ENCODE measurements at regions of chr1 and their contacts with region 1.

Region 1: GRCh38 chr1:150979092-150980056 is 2.7 kb upstream of the ANXA9 start:
- DNase-seq: peak; percentile 78 to 95 (median 84)
- ATAC-seq: peak; percentile 57
- H3K4me3 ChIP-seq: peak overlapping the region; percentile 7; the same call in 1 of the 2 replicates
- H3K27ac ChIP-seq: peak overlapping the region; percentile 79
- H3K4me1 ChIP-seq: peaks cover 44 to 56% of the 10 kb centered on the region in 2 experiments
- H3K27me3 ChIP-seq: no peaks in the 10 kb centered on the region
- CTCF ChIP-seq: peak; percentile 100
- EP300 ChIP-seq: peak; percentile 54; the same call in 1 of the 2 replicates
- POLR2A ChIP-seq: 0 out of 2 replicates have a peak, but pooled peaks have one; percentile 34
- RAD21 ChIP-seq: peak; percentile 89 to 94

Region 2: DNA sequence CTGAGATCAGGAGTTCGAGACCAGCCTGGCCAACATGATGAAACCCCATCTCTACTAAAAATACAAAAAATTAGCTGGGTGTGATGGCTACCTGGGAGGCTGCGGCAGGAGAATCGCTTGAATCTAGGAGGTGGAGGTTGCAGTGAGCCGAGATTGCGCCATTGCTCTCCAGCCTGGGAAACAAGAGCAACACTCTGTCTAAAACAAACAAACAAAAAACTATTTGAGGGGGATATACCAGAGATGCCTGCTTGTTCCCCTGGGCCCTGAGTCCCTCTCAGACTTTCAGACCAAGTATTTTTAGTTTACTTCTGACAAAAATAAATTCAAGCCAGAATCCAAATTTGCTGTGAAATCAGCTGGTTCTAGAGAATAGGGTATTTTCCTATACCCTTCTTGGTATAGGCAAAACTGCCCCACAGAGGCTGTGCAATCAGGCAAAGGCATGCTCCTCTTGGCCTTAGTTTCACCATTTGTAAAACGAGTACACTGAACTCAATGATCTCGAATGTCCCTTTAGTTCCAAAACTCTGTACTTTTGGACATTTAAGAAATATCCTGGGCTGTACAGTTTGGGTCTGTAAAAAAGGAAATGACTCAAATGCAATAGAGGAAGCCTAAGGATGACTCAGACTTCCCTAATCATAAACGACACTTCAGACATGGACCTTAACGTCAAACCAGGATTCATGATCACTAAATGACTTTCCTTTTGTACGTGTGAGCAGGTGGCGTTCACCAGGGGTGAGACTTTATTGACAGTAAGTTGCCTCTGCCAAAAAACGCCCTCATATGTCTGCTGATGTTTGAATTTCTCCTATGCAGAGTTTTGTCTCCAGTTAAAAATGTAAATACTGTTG is 366.1 kb before region 1 on chr1:
- CTCF ChIA-PET with region 1: no interaction called
- POLR2A ChIA-PET with region 1: no interaction called
- in situ Hi-C with region 1: no loop called
- intact Hi-C with region 1: loop called (anchors 10 kb)
- DNase-seq: peak; percentile 26 to 87 (median 49)
- ATAC-seq: peak; percentile 79
- H3K4me3 ChIP-seq: no peak overlapping the region
- H3K27ac ChIP-seq: peak overlapping the region; percentile 94
- H3K4me1 ChIP-seq: peaks cover 26 to 44% of the 10 kb centered on the region in 2 experiments
- H3K27me3 ChIP-seq: no peaks in the 10 kb centered on the region
- CTCF ChIP-seq: no peak
- EP300 ChIP-seq: peak; percentile 92
- POLR2A ChIP-seq: no peak
- RAD21 ChIP-seq: peak in 1 of 2 experiments; percentile 7; a peak in 1 of 4 replicates

Region 3: GRCh38 chr1:150876119-150876454 is 103.3 kb before region 1 on chr1:
- CTCF ChIA-PET with region 1: no interaction called
- POLR2A ChIA-PET with region 1: interaction called, 4 read pairs
- in situ Hi-C with region 1: no loop called
- intact Hi-C with region 1: loop called (anchors 2 kb)
- DNase-seq: peak in 1 of 4 experiments; percentile 78
- ATAC-seq: peak; percentile 78
- H3K4me3 ChIP-seq: peak overlapping the region; percentile 72
- H3K27ac ChIP-seq: peak overlapping the region; percentile 80
- H3K4me1 ChIP-seq: peaks cover 4 to 8% of the 10 kb centered on the region in 2 experiments; a peak in 3 of 5 replicates
- H3K27me3 ChIP-seq: no peaks in the 10 kb centered on the region
- CTCF ChIP-seq: no peak
- EP300 ChIP-seq: no peak
- POLR2A ChIP-seq: no peak
- RAD21 ChIP-seq: no peak

Region 4: GRCh38 chr1:150925816-150926741 is 53.3 kb before region 1 on chr1 and contains the start of gene SETDB1:
- CTCF ChIA-PET with region 1: interaction called, 5 read pairs
- POLR2A ChIA-PET with region 1: interaction called, 3 read pairs
- in situ Hi-C with region 1: no loop called
- intact Hi-C with region 1: loop called (anchors 2 kb)
- DNase-seq: peak; percentile 91 to 98 (median 94)
- ATAC-seq: peak; percentile 97
- H3K4me3 ChIP-seq: peak within 1 kb of the TSS; percentile 70
- H3K27ac ChIP-seq: peak within 1 kb of the TSS; percentile 90
- H3K4me1 ChIP-seq: peaks cover 3 to 9% of the 10 kb centered on the region in 2 experiments; a peak in 2 of 5 replicates
- H3K27me3 ChIP-seq: no peaks in the 10 kb centered on the region
- CTCF ChIP-seq: peak; percentile 23 to 42 (median 25); a peak in 3 of 6 replicates
- EP300 ChIP-seq: peak; percentile 67
- POLR2A ChIP-seq: peak; percentile 85
- RAD21 ChIP-seq: peak in 1 of 2 experiments; percentile 16; a peak in 1 of 4 replicates
- polyA plus RNA-seq, gene SETDB1: 21.5 to 21.8 TPM

Region 5: GRCh38 chr1:150961799-150962198 is 17.6 kb before region 1 on chr1:
- CTCF ChIA-PET with region 1: interaction called, 5 read pairs
- POLR2A ChIA-PET with region 1: interaction called, 58 read pairs
- in situ Hi-C with region 1: no loop called
- intact Hi-C with region 1: no loop called
- DNase-seq: no peak
- ATAC-seq: peak; percentile 15
- H3K4me3 ChIP-seq: no peak overlapping the region
- H3K27ac ChIP-seq: no peak overlapping the region
- H3K4me1 ChIP-seq: no peaks in the 10 kb centered on the region; a peak in 1 of 5 replicates
- H3K27me3 ChIP-seq: no peaks in the 10 kb centered on the region
- CTCF ChIP-seq: no peak
- EP300 ChIP-seq: no peak
- POLR2A ChIP-seq: peak; percentile 11; the same call in 1 of the 2 replicates
- RAD21 ChIP-seq: no peak

Region 6: DNA sequence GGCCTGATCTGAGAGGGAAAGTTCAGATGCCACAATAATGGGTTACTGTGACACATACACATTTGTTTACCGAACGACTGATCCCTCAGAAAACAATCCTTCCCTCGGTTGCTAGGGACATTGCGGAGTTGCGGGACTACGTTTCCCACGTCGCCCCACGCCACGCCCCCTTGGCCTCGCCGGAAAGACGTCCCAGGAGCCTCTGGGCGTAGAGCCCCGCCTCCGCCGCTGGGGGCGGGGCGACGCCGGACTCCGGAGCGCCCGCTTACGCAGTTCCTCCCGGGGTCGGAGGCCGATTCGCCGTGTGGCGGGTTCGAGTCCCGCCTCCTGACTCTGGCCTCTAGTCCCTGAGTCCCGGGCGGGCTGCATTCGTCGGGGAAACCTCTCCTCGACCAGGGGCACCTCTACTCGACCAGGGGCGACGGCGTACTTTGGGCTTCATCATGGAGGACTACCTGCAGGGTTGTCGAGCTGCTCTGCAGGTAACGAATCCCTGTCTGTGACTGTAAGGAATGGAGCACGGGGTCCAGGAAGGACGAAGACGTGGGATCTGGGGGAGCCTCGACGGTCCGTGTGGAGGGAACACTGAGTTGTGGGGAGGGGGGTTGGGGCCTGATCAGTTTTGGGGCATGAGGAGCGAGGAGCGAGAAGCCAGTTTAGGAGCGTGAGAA is 29.0 kb after region 1 on chr1 and contains the start of gene PRUNE1:
- CTCF ChIA-PET with region 1: interaction called, 12 read pairs
- POLR2A ChIA-PET with region 1: interaction called, 10 read pairs
- in situ Hi-C with region 1: no loop called
- intact Hi-C with region 1: loop called (anchors 2 kb)
- DNase-seq: peak; percentile 97 to 98 (median 98)
- ATAC-seq: peak; percentile 82
- H3K4me3 ChIP-seq: peak within 1 kb of the TSS; percentile 87
- H3K27ac ChIP-seq: peak within 1 kb of the TSS; percentile 92
- H3K4me1 ChIP-seq: peaks cover 37 to 45% of the 10 kb centered on the region in 2 experiments
- H3K27me3 ChIP-seq: no peaks in the 10 kb centered on the region
- CTCF ChIP-seq: no peak
- EP300 ChIP-seq: no peak; the same call in 1 of the 2 replicates
- POLR2A ChIP-seq: peak; percentile 77
- RAD21 ChIP-seq: no peak
- polyA plus RNA-seq, gene PRUNE1: 16.7 to 27.7 TPM

Region 7: GRCh38 chr1:151047925-151048645 is 68.7 kb after region 1 on chr1:
- CTCF ChIA-PET with region 1: no interaction called
- POLR2A ChIA-PET with region 1: no interaction called
- in situ Hi-C with region 1: no loop called
- intact Hi-C with region 1: no loop called
- DNase-seq: peak in 2 of 4 experiments; percentile 45 to 67
- ATAC-seq: peak; percentile 74
- H3K4me3 ChIP-seq: peak overlapping the region; percentile 39
- H3K27ac ChIP-seq: peak overlapping the region; percentile 52
- H3K4me1 ChIP-seq: peaks cover 18 to 22% of the 10 kb centered on the region in 2 experiments; a peak in 4 of 5 replicates
- H3K27me3 ChIP-seq: no peaks in the 10 kb centered on the region
- CTCF ChIP-seq: peak in 2 of 3 experiments; percentile 46 to 48; a peak in 5 of 6 replicates
- EP300 ChIP-seq: no peak
- POLR2A ChIP-seq: peak; percentile 17; the same call in 1 of the 2 replicates
- RAD21 ChIP-seq: no peak

Measured in K562 (cell line).